Activated CD4-positive, alpha-beta T cell treated with anti-CD3 and anti-CD28 coated beads, Interleukin-2, amount 10 ng/mL, durations not matched to agents 7 days and 5 days (primary cell): ENCODE measurements at regions of chr17 and their contacts with region 1.

Region 1: DNA sequence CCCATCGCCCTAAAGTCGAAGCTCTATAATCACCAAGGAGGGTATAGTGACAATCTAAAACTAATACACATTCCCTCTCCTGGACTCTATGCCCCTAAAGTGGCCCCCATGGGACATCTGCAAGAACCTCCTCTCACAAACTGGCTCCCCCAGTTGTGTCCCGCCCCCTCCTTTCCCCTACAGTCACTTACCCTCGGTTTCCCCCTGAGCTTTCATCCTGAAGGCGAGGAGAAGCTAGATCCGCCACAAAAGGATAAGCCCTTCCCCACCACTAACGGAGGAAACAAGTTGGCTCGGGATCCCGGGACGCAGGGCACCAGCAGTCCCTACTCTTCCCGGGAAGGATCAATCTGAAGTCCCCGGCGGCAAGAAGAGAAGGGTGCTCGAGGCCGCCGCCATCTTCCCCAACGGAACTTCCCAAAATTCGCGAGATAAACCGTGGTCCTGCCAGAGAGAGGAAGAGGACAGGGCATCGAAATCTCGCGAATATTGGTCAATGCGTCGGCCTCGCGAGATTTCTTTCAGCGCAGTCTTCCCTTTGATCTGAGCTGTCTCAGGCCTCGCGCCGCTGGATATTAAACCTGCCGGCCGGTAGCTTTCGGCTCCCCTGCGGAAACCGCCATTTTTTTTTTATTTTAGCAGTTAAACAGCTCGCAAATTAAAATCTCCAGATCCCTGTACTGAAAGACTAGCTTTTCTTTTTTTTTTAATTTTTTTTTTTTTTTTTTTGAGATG is at the start of gene MED1:
- DNase-seq: peak; percentile 96
- H3K4me3 Mint-ChIP-seq: peak within 1 kb of the TSS; percentile 95
- H3K27ac Mint-ChIP-seq: peak within 1 kb of the TSS; percentile 99
- H3K4me1 Mint-ChIP-seq: peaks cover 33% of the 10 kb centered on the region
- H3K27me3 Mint-ChIP-seq: no peaks in the 10 kb centered on the region
- total RNA-seq, gene MED1: 55.8 to 59.1 TPM

Region 2: DNA sequence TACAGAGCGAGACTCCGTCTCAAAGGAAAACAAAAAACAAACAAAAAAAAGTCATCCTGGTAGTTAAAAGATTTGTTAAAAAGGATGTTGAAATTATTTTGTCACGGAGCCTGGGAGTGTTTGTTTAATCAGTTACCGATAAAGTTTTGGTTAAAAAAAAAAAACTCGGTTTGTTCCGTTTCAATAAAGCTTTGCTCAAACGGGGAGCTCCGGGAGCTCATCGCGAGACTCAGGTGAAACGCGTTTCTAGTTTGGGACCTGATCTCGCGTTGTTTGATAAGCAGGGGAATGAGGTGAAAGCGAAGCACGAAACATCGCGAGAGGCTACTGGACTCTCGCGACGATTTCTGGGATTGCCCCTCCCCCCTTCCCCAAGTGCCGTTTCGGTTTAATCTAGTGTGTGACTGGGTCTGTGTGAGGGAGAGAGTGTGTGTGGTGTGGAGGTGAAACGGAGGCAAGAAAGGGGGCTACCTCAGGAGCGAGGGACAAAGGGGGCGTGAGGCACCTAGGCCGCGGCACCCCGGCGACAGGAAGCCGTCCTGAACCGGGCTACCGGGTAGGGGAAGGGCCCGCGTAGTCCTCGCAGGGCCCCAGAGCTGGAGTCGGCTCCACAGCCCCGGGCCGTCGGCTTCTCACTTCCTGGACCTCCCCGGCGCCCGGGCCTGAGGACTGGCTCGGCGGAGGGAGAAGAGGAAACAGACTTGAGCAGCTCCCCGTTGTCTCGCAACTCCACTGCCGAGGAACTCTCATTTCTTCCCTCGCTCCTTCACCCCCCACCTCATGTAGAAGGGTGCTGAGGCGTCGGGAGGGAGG is 10.3 kb after region 1 on chr17 and contains the start of gene CDK12:
- CTCF ChIA-PET with region 1: interaction called, 12 read pairs
- POLR2A ChIA-PET with region 1: interaction called, 10 read pairs
- DNase-seq: peak; percentile 98
- H3K4me3 Mint-ChIP-seq: peak within 1 kb of the TSS; percentile 86
- H3K27ac Mint-ChIP-seq: peak within 1 kb of the TSS; percentile 95
- H3K4me1 Mint-ChIP-seq: peaks cover 34% of the 10 kb centered on the region
- H3K27me3 Mint-ChIP-seq: no peaks in the 10 kb centered on the region
- total RNA-seq, gene CDK12: 89.9 to 100 TPM

Region 3: DNA sequence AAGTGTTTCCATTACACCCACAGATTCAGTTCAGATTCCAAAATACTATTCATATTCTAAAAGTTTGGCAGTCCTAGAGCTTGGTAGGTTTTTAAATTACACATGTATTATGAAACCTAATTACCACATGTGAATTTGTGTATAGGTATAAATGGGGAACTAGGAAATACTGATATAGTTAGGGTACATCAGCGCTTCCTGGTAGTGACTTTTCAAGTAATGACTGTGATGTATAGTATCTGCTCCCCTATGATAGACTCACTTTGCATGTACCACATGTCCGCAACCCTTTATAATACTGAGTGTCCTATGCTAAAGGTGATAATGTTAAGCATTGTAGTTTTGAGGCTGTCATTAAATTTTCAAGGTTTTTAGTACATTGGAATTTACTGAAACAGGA is 33.2 kb after region 1 on chr17:
- CTCF ChIA-PET with region 1: interaction called, 10 read pairs
- POLR2A ChIA-PET with region 1: no interaction called
- DNase-seq: no peak
- H3K4me3 Mint-ChIP-seq: no peak overlapping the region
- H3K27ac Mint-ChIP-seq: no peak overlapping the region
- H3K4me1 Mint-ChIP-seq: peaks cover 5% of the 10 kb centered on the region
- H3K27me3 Mint-ChIP-seq: no peaks in the 10 kb centered on the region

Region 4: DNA sequence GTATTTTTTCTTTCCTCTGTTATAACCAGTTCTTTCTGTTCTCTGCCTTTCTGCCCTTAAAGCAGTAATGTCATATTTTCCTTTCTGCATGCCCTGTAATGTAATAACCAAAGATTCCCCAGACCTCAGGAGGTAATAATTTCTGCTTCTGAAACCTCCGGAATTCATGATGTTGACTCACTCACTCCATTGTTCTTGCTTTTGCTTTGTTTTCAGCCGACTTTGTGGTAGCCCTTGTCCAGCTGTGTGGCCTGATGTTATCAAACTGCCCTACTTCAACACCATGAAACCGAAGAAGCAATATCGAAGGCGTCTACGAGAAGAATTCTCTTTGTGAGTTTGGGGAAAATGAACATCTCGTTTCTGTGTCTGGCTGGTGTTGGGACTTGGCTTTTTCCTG is 66.2 kb after region 1 on chr17:
- CTCF ChIA-PET with region 1: no interaction called
- POLR2A ChIA-PET with region 1: interaction called, 10 read pairs
- DNase-seq: no peak
- H3K4me3 Mint-ChIP-seq: no peak overlapping the region
- H3K27ac Mint-ChIP-seq: no peak overlapping the region
- H3K4me1 Mint-ChIP-seq: peaks cover 5% of the 10 kb centered on the region
- H3K27me3 Mint-ChIP-seq: no peaks in the 10 kb centered on the region